ENCODE measurements at regions of chr6 and their contacts with region 1.

Region 1: DNA sequence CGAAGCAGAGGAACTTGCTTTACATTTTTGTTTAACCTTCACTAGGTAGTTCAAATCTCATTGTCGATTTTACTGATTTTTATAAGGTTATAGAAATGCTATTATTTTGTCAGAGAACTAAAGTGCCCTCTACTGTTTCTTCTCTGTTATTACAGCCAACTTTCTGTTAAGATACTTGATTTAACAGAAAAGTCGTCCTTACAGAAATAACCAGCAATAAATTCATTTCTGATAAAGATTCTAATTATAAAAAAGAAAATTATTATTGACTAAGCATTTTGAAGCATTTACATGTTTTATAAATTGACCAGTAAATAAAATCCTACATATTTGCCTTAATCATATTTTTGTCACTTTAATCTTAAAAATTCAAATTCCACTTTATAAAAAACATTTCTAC is 60.8 kb downstream of the OGFRL1 start:
- DNase-seq: no peak
- H3K4me3 ChIP-seq: no peak overlapping the region
- H3K27ac ChIP-seq: no peak overlapping the region
- H3K4me1 ChIP-seq: no peaks in the 10 kb centered on the region
- H3K27me3 ChIP-seq: no peaks in the 10 kb centered on the region
- CTCF ChIP-seq: peak in 2 of 3 experiments; percentile 8 to 25; a peak in 2 of 4 replicates
- EP300 ChIP-seq: no peak
- POLR2A ChIP-seq: no peak
- RAD21 ChIP-seq: peak; percentile 51 to 60

Region 2: GRCh38 chr6:71168233-71168765 is 181.1 kb before region 1 on chr6:
- CTCF ChIA-PET with region 1: no interaction called
- POLR2A ChIA-PET with region 1: no interaction called
- DNase-seq: no peak
- H3K4me3 ChIP-seq: no peak overlapping the region
- H3K27ac ChIP-seq: no peak overlapping the region
- H3K4me1 ChIP-seq: no peaks in the 10 kb centered on the region
- H3K27me3 ChIP-seq: no peaks in the 10 kb centered on the region
- CTCF ChIP-seq: no peak
- EP300 ChIP-seq: no peak
- POLR2A ChIP-seq: no peak
- RAD21 ChIP-seq: no peak

Region 3: DNA sequence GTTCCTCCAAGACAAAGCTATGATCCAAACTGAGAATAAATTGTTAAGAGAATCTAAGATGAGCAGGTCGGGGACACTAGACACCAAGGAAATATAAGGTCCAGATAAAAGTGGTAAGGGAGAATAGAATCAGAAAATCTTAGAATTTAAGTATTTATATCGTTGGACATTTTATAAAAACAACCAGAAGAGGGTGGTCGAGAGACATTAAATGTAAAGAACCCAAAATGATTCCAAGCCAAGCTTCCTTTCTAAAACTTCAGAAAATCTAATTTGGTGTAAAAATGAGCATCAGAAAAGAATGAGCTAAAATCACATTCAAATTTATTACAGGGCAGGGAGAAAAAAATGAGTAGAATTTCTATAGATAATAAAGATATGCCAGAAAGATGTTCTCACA is 158.6 kb before region 1 on chr6:
- CTCF ChIA-PET with region 1: interaction called, 14 read pairs
- POLR2A ChIA-PET with region 1: no interaction called
- DNase-seq: no peak
- H3K4me3 ChIP-seq: no peak overlapping the region
- H3K27ac ChIP-seq: no peak overlapping the region
- H3K4me1 ChIP-seq: no peaks in the 10 kb centered on the region
- H3K27me3 ChIP-seq: no peaks in the 10 kb centered on the region
- CTCF ChIP-seq: peak in 1 of 3 experiments; percentile 13; a peak in 1 of 4 replicates
- EP300 ChIP-seq: no peak
- POLR2A ChIP-seq: no peak
- RAD21 ChIP-seq: peak in 1 of 2 experiments; percentile 43; a peak in 3 of 4 replicates

Measured in H1 (cell line).